Activated T-helper 1 cell treated with anti-CD3 and anti-CD28 coated beads, Interleukin-12 subunit alpha, Interleukin-12 subunit beta, Interleukin-2, Interleukin-4 antibody, amounts not matched to agents 30 ng/mL and 10 ng/mL and 1 ng/mL, durations not matched to agents 14 hours and 24 hours and 36 hours (primary cell): ENCODE measurements at regions of chr1 and their contacts with region 1.

Region 1: GRCh38 chr1:50348449-50349241 is 74.6 kb downstream of the DMRTA2 start:
- DNase-seq: peak; percentile 22
- H3K4me3 Mint-ChIP-seq: no peak overlapping the region
- H3K27ac Mint-ChIP-seq: no peak overlapping the region
- H3K4me1 Mint-ChIP-seq: no peaks in the 10 kb centered on the region
- H3K27me3 Mint-ChIP-seq: no peaks in the 10 kb centered on the region

Region 2: GRCh38 chr1:48677306-48678287 is 1671.0 kb before region 1 on chr1:
- intact Hi-C with region 1: loop called (anchors 2 kb)
- DNase-seq: no peak
- H3K4me3 Mint-ChIP-seq: no peak overlapping the region
- H3K27ac Mint-ChIP-seq: no peak overlapping the region
- H3K4me1 Mint-ChIP-seq: peaks cover 4% of the 10 kb centered on the region
- H3K27me3 Mint-ChIP-seq: peaks cover 4% of the 10 kb centered on the region